ENCODE measurements at regions of chr1 and their contacts with region 1.

Region 1: GRCh38 chr1:197902454-197903195 is at the start of gene C1orf53:
- DNase-seq: peak; percentile 50 to 83 (median 68)
- ATAC-seq: peak; percentile 90
- H3K4me3 Mint-ChIP-seq: peak within 1 kb of the TSS; percentile 80 to 99 (median 90)
- H3K27ac Mint-ChIP-seq: peak within 1 kb of the TSS in 9 of 10 donors; percentile 60 to 90 (median 83)
- H3K4me1 Mint-ChIP-seq: peaks cover 4 to 20% (median 12%) of the 10 kb centered on the region in 4 donors
- H3K27me3 Mint-ChIP-seq: peaks cover 27 to 56% (median 47%) of the 10 kb centered on the region in 5 donors
- polyA plus RNA-seq, gene C1orf53: 1.4 to 2.7 TPM in 2 of 3 donors, not detected in the other

Region 2: DNA sequence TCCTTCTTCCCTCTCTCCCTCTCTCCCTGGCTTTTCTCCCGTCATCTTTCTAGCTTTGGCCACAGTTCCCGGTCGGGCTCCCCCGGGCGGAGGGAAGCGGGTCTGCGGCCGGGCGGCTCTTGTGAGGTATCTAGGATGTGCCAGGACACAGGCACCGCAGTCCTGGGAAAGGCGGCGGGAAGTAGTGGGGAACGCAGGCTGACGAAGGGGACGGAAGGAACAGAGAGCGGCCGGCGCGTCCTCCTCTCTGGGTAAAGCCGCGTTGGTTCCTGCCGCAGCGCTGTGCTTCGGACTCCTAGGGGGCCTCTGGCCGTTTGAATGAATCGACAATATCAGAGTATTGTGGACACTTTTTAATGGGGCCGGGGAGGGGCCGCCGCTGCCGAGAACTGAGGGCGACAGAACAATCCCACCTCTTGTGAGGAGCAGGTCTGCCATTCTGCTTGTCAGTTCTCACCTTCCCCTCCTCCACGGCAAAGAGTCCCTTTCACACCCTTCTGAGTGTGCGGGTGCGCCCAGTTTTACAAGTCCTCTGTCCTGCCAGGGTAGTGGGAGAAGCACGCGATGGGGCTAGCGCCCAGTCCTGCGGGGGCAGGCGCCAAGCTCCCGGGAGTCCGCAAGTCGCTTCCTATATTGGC is 13.4 kb after region 1 on chr1:
- POLR2A ChIA-PET with region 1: interaction called, 12 read pairs
- DNase-seq: no peak
- ATAC-seq: no peak
- H3K4me3 Mint-ChIP-seq: peak overlapping the region; percentile 22 to 85 (median 71)
- H3K27ac Mint-ChIP-seq: no peak overlapping the region
- H3K4me1 Mint-ChIP-seq: peaks cover 48 to 92% (median 84%) of the 10 kb centered on the region in 4 donors
- H3K27me3 Mint-ChIP-seq: peaks cover 63 to 100% (median 90%) of the 10 kb centered on the region in 5 donors

Region 3: GRCh38 chr1:197948926-197949899 is 46.6 kb after region 1 on chr1:
- POLR2A ChIA-PET with region 1: no interaction called
- DNase-seq: peak in 7 of 10 donors; percentile 8 to 59 (median 33)
- ATAC-seq: peak; percentile 90 to 91
- H3K4me3 Mint-ChIP-seq: peak overlapping the region; percentile 13 to 76 (median 62)
- H3K27ac Mint-ChIP-seq: peak overlapping the region; percentile 15 to 92 (median 66)
- H3K4me1 Mint-ChIP-seq: peaks cover 22 to 33% (median 23%) of the 10 kb centered on the region in 4 donors
- H3K27me3 Mint-ChIP-seq: peaks cover 5 to 10% (median 8%) of the 10 kb centered on the region in 5 donors